Psoas muscle (tissue), 8 donors: ENCODE measurements at regions of chr3 and their contacts with region 1.

Region 1: DNA sequence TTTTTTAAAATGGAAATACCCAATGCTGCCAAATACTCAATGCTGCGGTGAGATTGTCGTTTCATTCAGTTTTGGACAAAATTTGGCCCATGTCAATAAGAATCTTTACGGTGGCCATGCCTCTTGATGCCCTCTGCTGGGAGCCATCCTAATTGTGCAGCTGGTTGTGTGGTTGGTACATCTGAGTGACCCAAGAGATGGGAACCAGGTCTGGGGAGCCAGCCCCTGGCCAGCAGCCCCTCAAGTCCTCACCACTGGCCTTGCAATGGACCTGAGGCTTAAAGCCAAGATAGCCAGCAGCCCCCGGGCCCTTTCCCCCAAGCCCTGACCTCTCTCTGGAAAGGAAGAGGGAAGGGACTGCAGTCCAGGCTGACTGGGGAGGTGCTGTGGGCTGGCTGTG is 36.4 kb upstream of the ESYT3 start:
- DNase-seq: no peak
- ATAC-seq: peak in 2 of 4 donors; percentile 42 to 52
- H3K4me3 ChIP-seq: no peak overlapping the region
- H3K27ac ChIP-seq: no peak overlapping the region
- H3K4me1 ChIP-seq: peaks cover 32% of the 10 kb centered on the region
- H3K27me3 ChIP-seq: no peaks in the 10 kb centered on the region
- CTCF ChIP-seq: no peak

Region 2: GRCh38 chr3:138338811-138339210 is 59.2 kb before region 1 on chr3:
- intact Hi-C with region 1: loop called (anchors 5 kb)
- DNase-seq: peak in 1 of 2 donors; percentile 72
- ATAC-seq: peak; percentile 85 to 90 (median 89)
- H3K4me3 ChIP-seq: no peak overlapping the region
- H3K27ac ChIP-seq: peak overlapping the region; percentile 78
- H3K4me1 ChIP-seq: peaks cover 15% of the 10 kb centered on the region
- H3K27me3 ChIP-seq: no peaks in the 10 kb centered on the region
- CTCF ChIP-seq: no peak